Mammary epithelial cell (primary cell): ENCODE measurements at regions of chr15 and their contacts with region 1.

Region 1: DNA sequence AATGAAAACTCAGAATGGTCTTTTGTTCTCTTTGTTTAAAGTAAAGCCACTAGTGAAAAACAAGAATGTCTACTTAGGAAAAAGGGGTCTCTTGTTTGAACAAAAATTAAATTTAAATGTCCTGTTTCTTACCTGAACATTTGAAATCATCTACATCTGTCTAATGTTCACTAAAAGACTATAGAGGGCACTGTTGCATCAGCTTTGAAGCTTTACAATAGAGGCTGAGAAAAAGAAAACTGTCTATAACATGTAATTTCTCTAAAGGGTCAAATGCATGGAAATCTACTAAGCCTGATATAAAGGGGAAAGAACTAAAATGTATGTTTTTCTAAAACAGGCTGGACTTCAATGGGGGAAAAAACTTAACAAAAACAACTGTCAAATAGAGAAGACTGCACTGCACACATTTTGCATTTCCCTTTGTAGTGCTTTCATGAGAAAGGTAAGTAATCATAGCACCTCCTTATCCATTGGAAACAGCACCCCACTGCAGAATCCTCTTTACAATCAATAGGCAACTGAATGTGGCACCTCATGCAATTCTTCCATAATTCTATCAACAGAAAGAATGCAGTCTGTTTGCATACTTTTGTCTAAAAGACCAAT is 26.3 kb downstream of the DPH6 start:
- DNase-seq: peak; percentile 35
- H3K4me3 ChIP-seq: no peak overlapping the region
- H3K27ac ChIP-seq: no peak overlapping the region
- H3K4me1 ChIP-seq: no peaks in the 10 kb centered on the region
- H3K27me3 ChIP-seq: no peaks in the 10 kb centered on the region
- CTCF ChIP-seq: peak; percentile 49 to 62

Region 2: GRCh38 chr15:35289024-35289617 is 230.5 kb before region 1 on chr15:
- CTCF ChIA-PET with region 1: no interaction called
- dilution Hi-C with region 1: no loop called
- in situ Hi-C with region 1: no loop called
- intact Hi-C with region 1: loop called (anchors 2 kb)
- DNase-seq: peak; percentile 34
- H3K4me3 ChIP-seq: no peak overlapping the region
- H3K27ac ChIP-seq: no peak overlapping the region
- H3K4me1 ChIP-seq: peaks cover 12% of the 10 kb centered on the region
- H3K27me3 ChIP-seq: no peaks in the 10 kb centered on the region
- CTCF ChIP-seq: peak; percentile 84 to 88

Region 3: GRCh38 chr15:35427091-35427490 is 92.6 kb before region 1 on chr15:
- CTCF ChIA-PET with region 1: no interaction called
- dilution Hi-C with region 1: no loop called
- in situ Hi-C with region 1: no loop called
- intact Hi-C with region 1: no loop called
- DNase-seq: peak; percentile 46
- H3K4me3 ChIP-seq: no peak overlapping the region
- H3K27ac ChIP-seq: no peak overlapping the region
- H3K4me1 ChIP-seq: peaks cover 5% of the 10 kb centered on the region
- H3K27me3 ChIP-seq: no peaks in the 10 kb centered on the region
- CTCF ChIP-seq: no peak

Region 4: GRCh38 chr15:35886765-35887164 is 367.1 kb after region 1 on chr15:
- CTCF ChIA-PET with region 1: no interaction called
- dilution Hi-C with region 1: no loop called
- in situ Hi-C with region 1: no loop called
- intact Hi-C with region 1: loop called (anchors 10 kb)
- DNase-seq: peak; percentile 26
- H3K4me3 ChIP-seq: no peak overlapping the region
- H3K27ac ChIP-seq: no peak overlapping the region
- H3K4me1 ChIP-seq: peaks cover 21% of the 10 kb centered on the region
- H3K27me3 ChIP-seq: no peaks in the 10 kb centered on the region
- CTCF ChIP-seq: no peak

Region 5: GRCh38 chr15:35912196-35912595 is 392.6 kb after region 1 on chr15:
- CTCF ChIA-PET with region 1: no interaction called
- dilution Hi-C with region 1: no loop called
- in situ Hi-C with region 1: no loop called
- intact Hi-C with region 1: loop called (anchors 1 kb)
- DNase-seq: peak; percentile 5
- H3K4me3 ChIP-seq: no peak overlapping the region
- H3K27ac ChIP-seq: no peak overlapping the region
- H3K4me1 ChIP-seq: no peaks in the 10 kb centered on the region
- H3K27me3 ChIP-seq: no peaks in the 10 kb centered on the region
- CTCF ChIP-seq: peak in 1 of 2 donors; percentile 55